Esophagus muscularis mucosa (tissue), 4 donors: ENCODE measurements at regions of chr12 and their contacts with region 1.

Region 1: DNA sequence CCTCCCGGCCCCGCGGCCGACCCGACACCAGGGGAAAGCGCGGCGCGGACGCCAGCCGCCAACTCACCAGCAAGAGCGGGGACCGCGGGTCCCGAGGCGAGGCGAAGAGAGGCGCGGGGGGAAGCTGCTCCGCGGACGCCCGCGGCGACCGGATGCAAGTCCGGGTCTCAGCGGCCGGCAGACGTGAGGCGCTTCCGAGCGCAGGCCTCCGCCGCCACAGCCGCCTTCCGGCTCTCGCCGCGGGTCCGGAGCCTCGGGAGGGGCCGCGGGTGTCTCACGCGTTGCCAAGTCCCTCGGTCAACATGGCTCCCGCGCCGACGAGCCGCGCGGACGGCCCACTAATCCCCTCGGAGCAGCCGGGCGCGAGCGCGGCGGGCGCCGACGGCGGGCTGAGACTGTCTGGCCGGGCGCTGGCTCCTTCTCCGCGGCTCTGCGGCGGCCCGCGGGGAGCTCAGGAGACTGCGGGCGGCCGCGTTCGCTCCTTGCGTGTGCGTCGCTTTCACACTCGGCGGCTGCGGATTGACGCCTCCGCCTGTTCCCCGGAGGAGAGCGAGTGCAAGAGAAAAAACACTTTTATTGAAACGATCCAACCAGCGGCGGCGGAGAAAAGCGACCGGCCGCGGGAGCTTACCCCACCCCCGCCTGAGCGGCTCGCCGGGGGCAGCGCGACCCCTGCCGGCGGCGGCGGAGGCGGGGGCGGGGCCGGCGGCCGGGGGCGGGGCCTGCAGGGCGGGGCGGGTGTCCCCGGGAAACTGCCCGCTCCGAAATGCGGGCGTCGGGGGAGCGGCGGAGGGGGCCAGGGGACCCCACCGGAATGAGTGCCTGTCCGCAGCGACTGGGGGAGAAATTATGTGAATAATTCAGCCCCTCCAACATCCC is at the start of gene CDK17:
- DNase-seq: peak; percentile 93
- H3K4me3 ChIP-seq: peak within 1 kb of the TSS; percentile 94 to 98 (median 96)
- H3K27ac ChIP-seq: peak within 1 kb of the TSS; percentile 100
- H3K4me1 ChIP-seq: peaks cover 9 to 41% (median 37%) of the 10 kb centered on the region in 4 donors
- H3K27me3 ChIP-seq: no peaks in the 10 kb centered on the region
- CTCF ChIP-seq: peak; percentile 43 to 66 (median 54)
- EP300 ChIP-seq: no peak
- POLR2A ChIP-seq: peak; percentile 70
- total RNA-seq, gene CDK17: 56.2 to 96.9 (median 68.6) TPM

Region 2: DNA sequence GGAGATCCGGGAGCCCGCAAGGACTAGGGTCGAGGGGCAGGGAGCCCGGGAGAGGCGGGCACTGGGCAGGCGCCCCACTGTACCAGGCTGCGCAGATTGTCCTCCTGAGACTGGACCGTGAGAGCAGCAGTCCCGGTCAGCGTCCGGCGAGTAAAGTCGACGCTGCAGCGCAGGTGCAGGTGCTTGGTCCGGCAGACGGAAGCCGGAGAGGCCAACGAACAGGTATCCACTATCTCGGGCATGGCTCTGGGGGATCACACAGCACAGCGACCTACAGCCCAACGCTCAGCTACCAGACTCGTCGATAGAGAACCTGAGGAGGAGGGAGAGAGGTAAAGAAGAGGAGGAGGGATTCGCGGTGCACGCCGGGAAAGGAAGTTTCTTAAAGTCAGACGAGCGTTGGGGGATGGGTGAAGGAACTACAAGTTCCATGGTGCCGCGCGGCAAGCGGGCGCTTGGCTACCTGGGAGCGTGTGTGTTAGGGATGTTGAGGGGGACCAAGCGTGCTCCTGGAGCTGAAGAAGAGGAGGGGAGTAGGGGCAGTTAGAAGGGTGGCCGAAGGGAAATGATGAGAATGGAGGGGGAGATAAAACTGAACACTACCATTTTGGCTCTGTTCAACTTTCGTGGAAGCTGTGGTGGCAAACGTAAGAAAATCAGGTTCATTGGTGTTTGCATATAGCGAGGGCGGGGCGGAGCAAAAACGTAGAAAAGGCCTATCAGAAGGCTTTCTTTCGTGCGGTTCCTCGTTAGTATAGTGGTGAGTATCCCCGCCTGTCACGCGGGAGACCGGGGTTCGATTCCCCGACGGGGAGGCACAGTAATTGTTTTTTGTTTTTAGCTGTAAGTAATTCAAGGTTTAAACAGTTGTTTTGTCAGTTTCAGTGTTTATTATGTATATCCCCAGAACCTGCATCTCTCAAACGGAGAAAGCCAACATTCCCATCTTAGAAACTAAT is 364.6 kb before region 1 on chr12 and contains the start of gene LTA4H:
- intact Hi-C with region 1: loop called (anchors 10 kb)
- DNase-seq: peak; percentile 100
- H3K4me3 ChIP-seq: peak within 1 kb of the TSS; percentile 73 to 96 (median 78)
- H3K27ac ChIP-seq: peak within 1 kb of the TSS; percentile 79 to 94 (median 90)
- H3K4me1 ChIP-seq: peaks cover 13 to 34% (median 31%) of the 10 kb centered on the region in 4 donors
- H3K27me3 ChIP-seq: no peaks in the 10 kb centered on the region
- CTCF ChIP-seq: no peak
- EP300 ChIP-seq: no peak
- POLR2A ChIP-seq: peak; percentile 21
- total RNA-seq, gene LTA4H: 47.8 to 75.0 (median 64.5) TPM

Region 3: DNA sequence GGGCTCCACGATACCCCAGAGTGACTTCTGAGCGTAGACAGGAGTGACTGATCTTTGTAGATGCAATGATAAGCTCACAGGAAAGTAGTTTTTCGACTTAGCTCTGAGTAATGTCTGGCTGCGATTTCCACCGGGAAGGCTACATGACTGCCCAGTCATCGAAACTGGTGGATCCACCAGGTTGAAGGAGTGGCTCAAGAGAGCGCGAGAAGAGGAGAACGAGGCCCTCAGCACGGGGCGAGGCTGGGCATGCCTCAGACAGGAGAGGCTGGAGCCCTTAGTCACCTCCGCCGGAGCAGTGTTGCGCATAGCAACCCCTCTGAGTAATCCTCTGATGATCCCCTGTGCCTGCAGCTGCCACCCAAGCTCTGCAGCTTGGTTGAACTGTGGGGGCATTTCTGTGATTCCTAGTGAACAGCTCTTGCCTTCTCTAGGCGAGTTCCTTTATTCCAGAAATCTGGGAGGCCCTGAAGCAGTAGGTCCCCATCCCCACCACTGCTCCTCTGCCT is 180.4 kb before region 1 on chr12:
- intact Hi-C with region 1: loop called (anchors 5 kb)
- DNase-seq: no peak
- H3K4me3 ChIP-seq: no peak overlapping the region
- H3K27ac ChIP-seq: peak overlapping the region in 3 of 4 donors; percentile 7 to 48 (median 43)
- H3K4me1 ChIP-seq: peaks cover 53 to 65% (median 57%) of the 10 kb centered on the region in 4 donors
- H3K27me3 ChIP-seq: no peaks in the 10 kb centered on the region
- CTCF ChIP-seq: no peak
- EP300 ChIP-seq: no peak
- POLR2A ChIP-seq: no peak

Region 4: GRCh38 chr12:96274331-96274730 is 125.8 kb before region 1 on chr12:
- intact Hi-C with region 1: no loop called
- DNase-seq: no peak
- H3K4me3 ChIP-seq: no peak overlapping the region
- H3K27ac ChIP-seq: no peak overlapping the region
- H3K4me1 ChIP-seq: peaks cover 0 to 16% (median 8%) of the 10 kb centered on the region in 4 donors
- H3K27me3 ChIP-seq: no peaks in the 10 kb centered on the region
- CTCF ChIP-seq: no peak
- EP300 ChIP-seq: no peak
- POLR2A ChIP-seq: no peak

Region 5: DNA sequence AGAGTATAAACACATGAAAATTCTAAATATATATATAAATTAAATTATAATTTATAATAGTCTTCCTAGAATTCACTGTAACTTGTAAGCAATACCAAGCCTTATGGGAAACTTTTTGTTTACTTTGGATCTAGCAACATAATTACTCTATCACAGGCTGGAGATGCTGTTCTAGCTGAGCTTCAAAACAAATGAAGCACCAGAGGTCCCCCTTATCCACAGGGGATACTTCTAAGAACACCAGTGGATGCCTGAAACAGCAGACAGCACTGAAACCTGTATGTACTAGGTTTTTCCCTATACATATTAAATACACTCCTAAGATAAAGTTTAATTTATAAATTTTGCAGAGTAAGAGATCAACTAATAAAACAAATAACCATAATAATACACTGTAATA is 96.5 kb before region 1 on chr12:
- intact Hi-C with region 1: loop called (anchors 10 kb)
- DNase-seq: no peak
- H3K4me3 ChIP-seq: no peak overlapping the region
- H3K27ac ChIP-seq: peak overlapping the region in 2 of 4 donors; percentile 18 to 50
- H3K4me1 ChIP-seq: peaks cover 5 to 46% (median 44%) of the 10 kb centered on the region in 4 donors
- H3K27me3 ChIP-seq: no peaks in the 10 kb centered on the region
- CTCF ChIP-seq: no peak
- EP300 ChIP-seq: no peak
- POLR2A ChIP-seq: no peak

Region 6: DNA sequence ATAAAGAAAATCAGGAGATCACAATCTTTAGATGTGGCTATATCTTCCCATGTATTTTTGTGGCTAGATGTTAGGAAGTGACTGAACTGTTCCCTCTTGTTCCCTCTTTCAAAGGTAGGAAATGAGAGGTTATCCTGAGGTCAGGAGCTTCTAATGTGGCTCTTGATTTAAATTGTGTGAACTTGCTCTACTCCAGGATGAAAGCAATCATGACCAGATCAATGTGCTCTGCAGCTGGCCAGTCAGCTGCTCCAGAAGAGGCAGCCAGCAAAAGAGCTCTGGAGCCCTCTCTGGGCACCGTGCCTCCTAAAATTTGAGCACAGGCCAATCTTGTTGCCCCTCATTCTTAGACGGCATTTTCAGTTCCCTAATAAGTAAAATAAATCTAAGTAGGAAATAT is 31.9 kb before region 1 on chr12:
- intact Hi-C with region 1: no loop called
- DNase-seq: no peak
- H3K4me3 ChIP-seq: no peak overlapping the region
- H3K27ac ChIP-seq: peak overlapping the region; percentile 18 to 67 (median 36)
- H3K4me1 ChIP-seq: peaks cover 47 to 100% (median 84%) of the 10 kb centered on the region in 4 donors
- H3K27me3 ChIP-seq: no peaks in the 10 kb centered on the region
- CTCF ChIP-seq: no peak
- EP300 ChIP-seq: no peak
- POLR2A ChIP-seq: no peak

Region 7: DNA sequence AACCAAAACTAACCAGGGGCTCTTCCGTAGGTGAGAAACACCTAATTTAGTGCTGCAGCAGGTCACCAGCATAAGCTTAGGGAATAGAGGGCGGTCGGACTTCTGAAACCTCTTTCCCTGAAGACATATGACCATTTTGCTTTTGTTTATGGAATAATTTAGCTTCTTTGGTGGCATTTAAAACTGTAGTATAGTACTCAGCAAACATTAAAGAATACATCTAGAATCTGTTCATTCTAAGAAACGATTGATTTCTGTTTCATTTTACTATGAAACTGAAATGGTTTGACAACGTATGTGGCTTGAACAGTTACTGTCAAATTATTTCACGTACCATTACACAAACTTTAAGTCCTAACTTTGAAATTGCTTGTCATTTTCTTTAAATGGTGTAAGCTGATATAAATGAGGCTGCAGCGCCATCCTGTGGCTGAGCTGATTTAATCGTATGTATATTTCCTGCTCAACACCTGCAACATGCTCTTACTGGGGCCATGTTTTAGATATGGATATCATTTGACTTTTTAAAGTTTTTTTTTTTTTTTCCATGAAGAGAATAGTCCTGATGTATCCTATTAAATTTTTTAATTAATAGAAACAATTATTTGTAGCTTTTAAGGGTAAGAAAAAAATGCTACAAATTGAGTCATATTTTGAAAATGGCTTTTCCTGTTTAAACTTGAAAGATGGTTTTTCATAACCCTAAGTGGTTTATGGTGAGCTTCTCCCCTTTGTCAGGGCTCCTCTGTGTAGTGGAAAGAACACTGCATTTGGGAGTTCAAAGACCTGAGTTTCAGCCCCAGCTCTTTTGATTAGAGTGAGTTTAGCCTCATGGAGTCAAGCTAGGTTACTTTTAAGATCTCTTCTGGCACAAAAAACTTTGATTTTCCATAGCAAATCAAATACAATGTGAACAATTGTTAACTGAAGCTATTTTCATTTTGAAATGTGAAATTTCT is 116.6 kb after region 1 on chr12:
- intact Hi-C with region 1: loop called (anchors 5 kb)
- DNase-seq: no peak
- H3K4me3 ChIP-seq: no peak overlapping the region
- H3K27ac ChIP-seq: peak overlapping the region in 1 of 4 donors; percentile 30
- H3K4me1 ChIP-seq: peaks cover 3 to 27% (median 23%) of the 10 kb centered on the region in 4 donors
- H3K27me3 ChIP-seq: no peaks in the 10 kb centered on the region
- CTCF ChIP-seq: peak; percentile 62 to 79 (median 65)
- EP300 ChIP-seq: no peak
- POLR2A ChIP-seq: no peak